ENCODE measurements at regions of chr12 and their contacts with region 1.

Region 1: GRCh38 chr12:95959107-95959506 is 16.0 kb downstream of the AMDHD1 start:
- DNase-seq: no peak
- ATAC-seq: peak; percentile 67
- H3K4me3 Mint-ChIP-seq: no peak overlapping the region
- H3K27ac Mint-ChIP-seq: no peak overlapping the region
- H3K4me1 Mint-ChIP-seq: peaks cover 19% of the 10 kb centered on the region
- H3K27me3 Mint-ChIP-seq: no peaks in the 10 kb centered on the region
- CTCF ChIP-seq: no peak

Region 2: DNA sequence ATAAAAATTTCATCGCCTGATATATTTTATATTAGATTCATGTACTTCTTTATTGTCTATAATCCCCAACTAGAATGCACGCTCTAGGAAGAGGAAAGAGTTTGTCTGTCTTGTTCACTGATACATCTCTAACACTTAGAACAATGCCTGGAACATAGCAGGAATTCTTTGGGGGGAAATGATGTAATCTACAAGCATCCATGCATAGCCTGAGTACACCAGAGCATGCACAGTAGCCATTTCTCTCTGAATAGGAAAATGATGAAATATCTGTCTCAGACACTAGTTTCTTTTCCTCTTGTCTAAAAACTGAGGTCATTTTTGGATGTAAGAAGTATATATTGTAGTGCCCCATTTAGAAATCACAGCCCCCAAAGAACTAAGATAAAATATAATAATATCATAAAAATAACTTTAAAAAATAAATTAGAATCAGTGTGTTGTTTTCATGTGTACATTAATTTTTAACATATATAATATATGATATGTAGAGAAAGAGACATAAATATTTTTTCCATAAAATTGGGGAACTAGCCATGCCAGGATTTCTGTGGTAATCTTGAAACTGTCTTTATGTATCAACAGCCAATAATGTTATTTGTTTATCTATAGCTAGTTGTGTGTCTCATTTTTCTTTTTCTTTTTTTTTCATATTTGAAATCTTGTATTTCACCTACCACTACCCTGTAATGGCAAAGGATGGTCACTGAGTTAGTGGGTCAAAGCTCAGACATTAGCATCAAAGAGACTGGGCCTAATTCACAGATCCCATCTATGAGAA is 1153.2 kb before region 1 on chr12:
- CTCF ChIA-PET with region 1: no interaction called
- POLR2A ChIA-PET with region 1: no interaction called
- DNase-seq: no peak
- ATAC-seq: no peak
- H3K4me3 Mint-ChIP-seq: no peak overlapping the region
- H3K27ac Mint-ChIP-seq: no peak overlapping the region
- H3K4me1 Mint-ChIP-seq: no peaks in the 10 kb centered on the region
- H3K27me3 Mint-ChIP-seq: peaks cover 3% of the 10 kb centered on the region; the same call in 1 of the 2 replicates
- CTCF ChIP-seq: no peak

Region 3: GRCh38 chr12:95918194-95918993 is 40.7 kb before region 1 on chr12:
- CTCF ChIA-PET with region 1: interaction called, 20 read pairs
- POLR2A ChIA-PET with region 1: interaction called, 3 read pairs
- DNase-seq: peak; percentile 47
- ATAC-seq: peak; percentile 99
- H3K4me3 Mint-ChIP-seq: no peak overlapping the region
- H3K27ac Mint-ChIP-seq: no peak overlapping the region
- H3K4me1 Mint-ChIP-seq: no peaks in the 10 kb centered on the region
- H3K27me3 Mint-ChIP-seq: no peaks in the 10 kb centered on the region
- CTCF ChIP-seq: peak; percentile 73

Region 4: GRCh38 chr12:95942524-95943329 is 16.4 kb before region 1 on chr12 and contains the start of gene CCDC38:
- CTCF ChIA-PET with region 1: interaction called, 15 read pairs
- POLR2A ChIA-PET with region 1: interaction called, 3 read pairs
- DNase-seq: peak; percentile 70
- ATAC-seq: peak; percentile 87
- H3K4me3 Mint-ChIP-seq: peak within 1 kb of the TSS; percentile 94
- H3K27ac Mint-ChIP-seq: peak within 1 kb of the TSS; percentile 58; the same call in 1 of the 2 replicates
- H3K4me1 Mint-ChIP-seq: peaks cover 23% of the 10 kb centered on the region
- H3K27me3 Mint-ChIP-seq: peaks cover 23% of the 10 kb centered on the region
- CTCF ChIP-seq: no peak
- total RNA-seq, gene CCDC38: 0.07 TPM in 1 of 3 replicates, not detected in the others

Measured in WTC11 (cell line).